Ovary (tissue), 10 donors: ENCODE measurements at regions of chr10 and their contacts with region 1.

Region 1: GRCh38 chr10:97612386-97612785 is 20.9 kb downstream of the MORN4 start:
- DNase-seq: no peak
- H3K4me3 ChIP-seq: no peak overlapping the region
- H3K27ac ChIP-seq: no peak overlapping the region
- H3K4me1 ChIP-seq: no peaks in the 10 kb centered on the region
- H3K27me3 ChIP-seq: no peaks in the 10 kb centered on the region
- CTCF ChIP-seq: peak in 1 of 3 donors; percentile 15
- EP300 ChIP-seq: no peak
- POLR2A ChIP-seq: no peak

Region 2: GRCh38 chr10:97400665-97401454 is 211.5 kb before region 1 on chr10 and contains the start of gene RRP12:
- intact Hi-C with region 1: loop called in 1 of 4 experiments (anchors 10 kb)
- DNase-seq: peak; percentile 69 to 91 (median 82)
- H3K4me3 ChIP-seq: peak within 1 kb of the TSS; percentile 71
- H3K27ac ChIP-seq: no peak within 1 kb of the TSS
- H3K4me1 ChIP-seq: peaks cover 4% of the 10 kb centered on the region
- H3K27me3 ChIP-seq: no peaks in the 10 kb centered on the region
- CTCF ChIP-seq: no peak
- EP300 ChIP-seq: no peak
- POLR2A ChIP-seq: peak; percentile 40
- total RNA-seq, gene RRP12: 14.7 to 35.8 (median 24.4) TPM

Region 3: GRCh38 chr10:97463363-97464132 is 148.8 kb before region 1 on chr10:
- intact Hi-C with region 1: loop called in 1 of 4 experiments (anchors 5 kb)
- DNase-seq: peak in 1 of 5 donors; percentile 19
- H3K4me3 ChIP-seq: no peak overlapping the region
- H3K27ac ChIP-seq: no peak overlapping the region
- H3K4me1 ChIP-seq: no peaks in the 10 kb centered on the region
- H3K27me3 ChIP-seq: no peaks in the 10 kb centered on the region
- CTCF ChIP-seq: peak; percentile 62 to 69 (median 63)
- EP300 ChIP-seq: no peak
- POLR2A ChIP-seq: no peak

Region 4: GRCh38 chr10:97475936-97476594 is 136.3 kb before region 1 on chr10:
- intact Hi-C with region 1: no loop called
- DNase-seq: no peak
- H3K4me3 ChIP-seq: no peak overlapping the region
- H3K27ac ChIP-seq: no peak overlapping the region
- H3K4me1 ChIP-seq: peaks cover 2% of the 10 kb centered on the region
- H3K27me3 ChIP-seq: no peaks in the 10 kb centered on the region
- CTCF ChIP-seq: no peak
- EP300 ChIP-seq: no peak
- POLR2A ChIP-seq: no peak

Region 5: GRCh38 chr10:97572214-97572989 is 40.0 kb before region 1 on chr10 and contains the start of gene ANKRD2:
- intact Hi-C with region 1: loop called in 1 of 4 experiments (anchors 2 kb)
- DNase-seq: peak; percentile 54 to 74 (median 59)
- H3K4me3 ChIP-seq: no peak within 1 kb of the TSS
- H3K27ac ChIP-seq: no peak within 1 kb of the TSS
- H3K4me1 ChIP-seq: no peaks in the 10 kb centered on the region
- H3K27me3 ChIP-seq: no peaks in the 10 kb centered on the region
- CTCF ChIP-seq: peak in 2 of 3 donors; percentile 43 to 64
- EP300 ChIP-seq: no peak
- POLR2A ChIP-seq: no peak
- total RNA-seq, gene ANKRD2: 0.37 to 0.46 (median 0.40) TPM in 3 of 7 donors, not detected in the others

Region 6: GRCh38 chr10:97590082-97590747 is 22.2 kb before region 1 on chr10:
- intact Hi-C with region 1: loop called in 1 of 4 experiments (anchors 2 kb)
- DNase-seq: no peak
- H3K4me3 ChIP-seq: no peak overlapping the region
- H3K27ac ChIP-seq: no peak overlapping the region
- H3K4me1 ChIP-seq: no peaks in the 10 kb centered on the region
- H3K27me3 ChIP-seq: no peaks in the 10 kb centered on the region
- CTCF ChIP-seq: no peak
- EP300 ChIP-seq: no peak
- POLR2A ChIP-seq: no peak

Region 7: GRCh38 chr10:98460837-98461499 is 848.6 kb after region 1 on chr10:
- intact Hi-C with region 1: no loop called
- DNase-seq: peak in 4 of 5 donors; percentile 45 to 67 (median 61)
- H3K4me3 ChIP-seq: no peak overlapping the region
- H3K27ac ChIP-seq: no peak overlapping the region
- H3K4me1 ChIP-seq: peaks cover 4% of the 10 kb centered on the region
- H3K27me3 ChIP-seq: no peaks in the 10 kb centered on the region
- CTCF ChIP-seq: no peak
- EP300 ChIP-seq: no peak
- POLR2A ChIP-seq: no peak

Region 8: DNA sequence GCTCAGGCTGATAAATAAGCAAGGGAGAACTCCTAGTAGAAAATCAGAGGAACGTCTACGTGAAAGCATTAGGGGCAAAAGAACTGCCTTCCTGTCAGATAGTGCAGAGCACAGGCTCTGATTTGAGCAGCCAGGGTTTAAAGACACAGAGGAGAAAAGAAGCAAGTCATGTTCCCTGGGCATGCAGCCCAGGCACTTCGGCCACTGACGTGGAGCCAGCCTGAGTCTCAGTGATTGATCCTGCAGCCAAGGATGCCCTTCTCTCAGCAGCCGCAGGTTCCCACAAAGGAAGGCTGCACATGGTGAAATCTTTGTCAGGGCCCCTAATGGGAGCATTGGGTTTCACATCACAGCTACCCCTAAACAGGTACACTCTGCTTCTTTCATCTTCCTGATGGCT is 996.0 kb after region 1 on chr10:
- intact Hi-C with region 1: no loop called
- DNase-seq: no peak
- H3K4me3 ChIP-seq: no peak overlapping the region
- H3K27ac ChIP-seq: no peak overlapping the region
- H3K4me1 ChIP-seq: no peaks in the 10 kb centered on the region
- H3K27me3 ChIP-seq: no peaks in the 10 kb centered on the region
- CTCF ChIP-seq: no peak
- EP300 ChIP-seq: no peak
- POLR2A ChIP-seq: no peak